Activated B cell treated with CpG ODN at 0.5 μM for 24 hours (primary cell): ENCODE measurements at regions of chr7 and their contacts with region 1.

Region 1: DNA sequence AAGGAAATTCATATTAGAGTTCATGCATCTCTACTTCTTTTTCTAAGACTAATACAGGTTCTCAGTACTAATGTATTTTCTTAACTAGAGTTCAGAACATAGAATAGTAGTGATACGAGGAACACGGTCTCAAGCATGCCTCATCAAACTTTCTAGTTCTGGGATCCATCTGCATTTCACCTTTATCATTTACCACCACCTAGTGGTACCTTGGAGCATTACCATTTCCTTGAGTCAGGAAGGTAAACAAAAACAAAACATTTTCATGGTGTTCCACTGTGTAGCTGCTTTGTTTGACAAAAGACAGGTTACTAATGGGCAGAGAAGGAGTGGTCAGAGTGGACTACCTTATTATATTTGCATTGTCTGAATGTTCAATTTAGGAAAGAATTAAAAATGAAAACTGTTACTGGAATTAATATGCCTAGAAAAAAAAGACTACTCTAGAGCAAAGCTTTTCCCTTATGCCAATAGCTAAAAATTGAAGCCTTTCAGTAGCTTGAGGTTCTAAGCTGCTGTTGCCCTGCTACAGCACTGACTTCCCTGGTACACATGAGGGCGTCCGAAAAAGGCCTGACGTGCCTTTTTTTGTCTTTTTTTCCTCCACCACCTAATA is 44.5 kb downstream of the STARD3NL start:
- DNase-seq: no peak
- ATAC-seq: peak; percentile 67
- H3K4me3 Mint-ChIP-seq: no peak overlapping the region
- H3K27ac Mint-ChIP-seq: no peak overlapping the region
- H3K4me1 Mint-ChIP-seq: no peaks in the 10 kb centered on the region
- H3K27me3 Mint-ChIP-seq: no peaks in the 10 kb centered on the region
- CTCF ChIP-seq: peak; percentile 76

Region 2: GRCh38 chr7:37901236-37901827 is 321.3 kb before region 1 on chr7:
- CTCF ChIA-PET with region 1: no interaction called
- POLR2A ChIA-PET with region 1: no interaction called
- intact Hi-C with region 1: loop called (anchors 1 kb)
- DNase-seq: no peak
- ATAC-seq: no peak
- H3K4me3 Mint-ChIP-seq: no peak overlapping the region
- H3K27ac Mint-ChIP-seq: no peak overlapping the region
- H3K4me1 Mint-ChIP-seq: no peaks in the 10 kb centered on the region
- H3K27me3 Mint-ChIP-seq: peaks cover 9% of the 10 kb centered on the region
- CTCF ChIP-seq: no peak

Region 3: DNA sequence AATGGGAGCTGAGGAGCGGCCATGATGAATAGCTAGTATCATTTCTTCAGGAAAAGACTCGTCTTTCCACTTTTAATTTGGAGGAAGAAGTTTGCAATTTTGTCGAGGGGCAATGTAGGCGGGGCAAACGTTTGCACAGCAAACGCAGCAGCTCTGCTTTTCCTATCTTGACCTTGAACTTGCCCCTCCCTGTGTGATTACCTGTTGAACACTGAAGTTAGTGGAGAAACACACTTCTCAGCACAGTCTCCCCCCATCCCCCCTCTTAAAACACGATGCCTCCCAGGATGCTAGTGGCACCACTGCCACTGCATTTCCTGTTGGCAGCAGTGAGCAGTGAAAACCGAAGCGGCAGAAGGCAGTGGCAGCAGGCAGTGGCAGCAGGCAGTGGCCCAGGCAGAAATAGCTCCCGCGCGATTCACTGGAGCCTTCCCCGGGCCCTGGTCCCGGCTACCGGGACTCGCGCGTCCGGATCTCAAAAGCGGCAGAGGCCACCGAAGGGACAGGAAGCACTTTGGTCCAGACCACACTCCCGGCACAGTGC is 302.2 kb before region 1 on chr7 and contains the start of gene EPDR1:
- CTCF ChIA-PET with region 1: interaction called, 4 read pairs
- POLR2A ChIA-PET with region 1: no interaction called
- intact Hi-C with region 1: loop called (anchors 2 kb)
- DNase-seq: no peak
- ATAC-seq: peak; percentile 77
- H3K4me3 Mint-ChIP-seq: peak within 1 kb of the TSS; percentile 77
- H3K27ac Mint-ChIP-seq: no peak within 1 kb of the TSS
- H3K4me1 Mint-ChIP-seq: peaks cover 33% of the 10 kb centered on the region
- H3K27me3 Mint-ChIP-seq: peaks cover 50% of the 10 kb centered on the region
- CTCF ChIP-seq: no peak
- total RNA-seq, gene EPDR1: 0.22 and 0.69 TPM in 2 replicates

Region 4: DNA sequence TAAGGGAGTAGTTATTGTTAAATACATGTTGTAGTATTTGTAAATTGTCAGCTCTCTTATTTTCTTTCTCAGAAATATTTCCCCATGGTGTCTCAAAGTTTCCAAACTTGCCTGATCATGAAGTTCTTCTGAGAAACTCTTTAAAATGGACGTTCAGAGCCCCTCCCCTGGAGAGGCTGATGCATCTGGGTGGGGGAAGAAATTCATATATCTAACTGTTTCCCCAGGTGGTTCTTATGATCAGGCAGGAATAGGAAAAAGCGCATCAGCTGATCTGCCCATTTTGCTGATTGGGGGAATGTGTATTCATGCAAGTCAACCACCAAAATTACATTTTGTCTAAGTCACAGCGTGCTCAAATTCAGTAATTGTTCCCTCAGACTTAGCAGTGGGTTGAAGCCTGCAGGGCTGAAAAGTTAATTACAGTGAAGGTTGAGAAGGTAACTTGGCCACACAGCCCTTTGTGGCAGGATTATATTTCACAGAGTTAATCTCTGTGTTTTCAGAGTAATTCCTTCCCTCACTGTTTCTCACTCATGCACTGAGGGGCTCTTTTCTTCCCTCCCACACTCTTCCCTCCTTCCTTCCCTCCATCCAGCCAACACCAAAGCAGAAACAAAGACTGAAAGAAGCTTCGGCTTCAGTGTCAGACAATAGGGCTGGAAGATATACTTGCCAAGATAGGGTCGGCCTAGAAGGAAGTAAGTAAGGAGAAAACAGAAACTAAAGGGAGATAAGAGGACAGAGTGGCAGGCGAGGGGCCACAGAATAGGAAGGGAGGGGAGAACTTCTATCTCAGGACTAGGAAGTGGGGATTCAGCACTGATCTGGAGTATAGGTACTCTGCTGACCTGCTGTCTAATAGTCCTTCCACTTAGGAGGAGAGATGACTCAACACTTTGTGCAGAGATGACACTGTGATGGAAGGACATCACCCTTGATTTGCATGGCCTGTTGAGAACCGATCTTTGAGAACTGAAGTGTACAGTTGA is 95.1 kb before region 1 on chr7:
- CTCF ChIA-PET with region 1: no interaction called
- POLR2A ChIA-PET with region 1: no interaction called
- intact Hi-C with region 1: no loop called
- DNase-seq: no peak
- ATAC-seq: no peak
- H3K4me3 Mint-ChIP-seq: no peak overlapping the region
- H3K27ac Mint-ChIP-seq: no peak overlapping the region
- H3K4me1 Mint-ChIP-seq: no peaks in the 10 kb centered on the region
- H3K27me3 Mint-ChIP-seq: peaks cover 18% of the 10 kb centered on the region
- CTCF ChIP-seq: no peak